Right ventricle myocardium superior (tissue), 1 donor: ENCODE measurements at regions of chr1 and their contacts with region 1.

Region 1: DNA sequence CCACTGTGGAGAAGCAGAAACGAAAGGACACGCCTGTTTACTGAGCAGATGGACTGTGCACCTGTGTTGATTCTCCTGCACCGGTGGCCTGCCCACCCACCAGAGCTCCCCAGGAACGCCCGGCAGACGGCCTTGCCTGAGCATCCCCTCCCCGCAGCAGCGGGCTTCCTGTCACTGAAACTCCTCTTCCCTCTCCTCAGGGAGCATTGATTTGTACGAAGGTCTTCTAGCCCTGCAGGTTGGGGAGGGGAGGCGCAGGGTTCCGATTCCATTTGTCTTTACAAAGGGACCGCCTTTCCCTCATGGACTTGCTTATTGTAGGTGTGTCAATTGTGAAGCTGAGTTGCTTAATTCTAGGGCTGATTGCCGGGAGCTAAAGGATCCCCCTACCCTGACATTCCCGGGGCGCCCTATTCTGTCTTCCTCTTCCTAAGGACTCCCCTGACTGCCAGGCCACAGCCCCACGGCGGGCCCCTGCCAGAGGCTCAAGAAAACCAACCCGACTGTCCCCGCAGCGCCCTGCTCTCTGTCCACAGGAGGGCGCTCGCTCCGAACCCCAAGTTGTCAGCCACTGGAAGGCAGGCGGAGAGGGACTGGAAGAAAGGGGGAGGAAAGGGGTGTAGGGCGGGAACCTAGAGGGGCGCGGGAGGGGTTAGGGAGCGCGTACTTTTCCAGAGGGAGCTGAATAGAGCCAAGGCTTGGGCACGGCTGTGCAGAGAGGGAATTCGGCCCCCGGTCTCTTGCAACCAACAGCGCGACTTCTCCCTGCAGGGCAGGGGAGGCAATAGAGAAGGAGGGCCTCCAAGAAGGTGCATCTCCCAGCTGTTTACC is 2.8 kb downstream of the S100A6 start:
- DNase-seq: peak; percentile 92
- ATAC-seq: peak; percentile 56

Region 2: GRCh38 chr1:153985941-153986761 is 453.2 kb after region 1 on chr1 and contains the start of gene RAB13:
- intact Hi-C with region 1: loop called (anchors 10 kb)
- DNase-seq: peak; percentile 89
- ATAC-seq: peak; percentile 86
- total RNA-seq, gene RAB13: 59.9 TPM